BJ (cell line): ENCODE measurements at regions of chr17 and their contacts with region 1.

Region 1: GRCh38 chr17:40303009-40303657 is 5.8 kb upstream of the RARA start:
- DNase-seq: no peak
- H3K4me3 ChIP-seq: no peak overlapping the region
- H3K27me3 ChIP-seq: no peaks in the 10 kb centered on the region
- CTCF ChIP-seq: peak; percentile 69

Region 2: GRCh38 chr17:40203131-40203530 is 100.0 kb before region 1 on chr17:
- CTCF ChIA-PET with region 1: interaction called, 20 read pairs
- POLR2A ChIA-PET with region 1: no interaction called
- DNase-seq: no peak
- H3K4me3 ChIP-seq: no peak overlapping the region
- H3K27me3 ChIP-seq: no peaks in the 10 kb centered on the region
- CTCF ChIP-seq: no peak

Region 3: DNA sequence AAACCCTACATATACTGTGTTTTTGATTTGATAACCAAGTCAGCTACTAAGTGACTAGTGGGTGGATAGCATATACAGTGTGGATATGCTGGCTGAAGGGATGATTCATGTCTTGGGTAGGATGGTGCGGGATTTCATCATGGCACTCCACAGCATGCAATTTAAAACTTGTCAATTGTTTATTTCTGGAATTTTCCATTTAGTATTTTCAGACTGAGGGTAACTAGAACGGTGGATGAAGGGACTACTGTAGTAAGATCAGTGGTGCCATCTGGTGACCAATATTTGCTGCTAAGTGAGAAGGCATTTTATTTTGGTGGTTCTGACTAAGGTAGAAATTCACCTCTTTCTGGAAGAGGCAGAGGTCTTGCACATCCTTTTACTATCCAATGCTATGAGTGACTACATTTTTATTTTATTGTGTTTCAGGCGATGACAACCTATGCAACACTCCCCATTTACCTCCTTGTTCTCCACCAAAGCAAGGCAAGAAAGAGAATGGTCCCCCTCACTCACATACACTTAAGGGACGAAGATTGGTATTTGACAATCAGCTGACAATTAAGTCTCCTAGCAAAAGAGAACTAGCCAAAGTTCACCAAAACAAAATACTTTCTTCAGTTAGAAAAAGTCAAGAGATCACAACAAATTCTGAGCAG is 12.4 kb before region 1 on chr17:
- CTCF ChIA-PET with region 1: interaction called, 11 read pairs
- POLR2A ChIA-PET with region 1: interaction called, 3 read pairs
- DNase-seq: peak; percentile 81
- H3K4me3 ChIP-seq: no peak overlapping the region
- H3K27me3 ChIP-seq: no peaks in the 10 kb centered on the region
- CTCF ChIP-seq: peak; percentile 67

Region 4: DNA sequence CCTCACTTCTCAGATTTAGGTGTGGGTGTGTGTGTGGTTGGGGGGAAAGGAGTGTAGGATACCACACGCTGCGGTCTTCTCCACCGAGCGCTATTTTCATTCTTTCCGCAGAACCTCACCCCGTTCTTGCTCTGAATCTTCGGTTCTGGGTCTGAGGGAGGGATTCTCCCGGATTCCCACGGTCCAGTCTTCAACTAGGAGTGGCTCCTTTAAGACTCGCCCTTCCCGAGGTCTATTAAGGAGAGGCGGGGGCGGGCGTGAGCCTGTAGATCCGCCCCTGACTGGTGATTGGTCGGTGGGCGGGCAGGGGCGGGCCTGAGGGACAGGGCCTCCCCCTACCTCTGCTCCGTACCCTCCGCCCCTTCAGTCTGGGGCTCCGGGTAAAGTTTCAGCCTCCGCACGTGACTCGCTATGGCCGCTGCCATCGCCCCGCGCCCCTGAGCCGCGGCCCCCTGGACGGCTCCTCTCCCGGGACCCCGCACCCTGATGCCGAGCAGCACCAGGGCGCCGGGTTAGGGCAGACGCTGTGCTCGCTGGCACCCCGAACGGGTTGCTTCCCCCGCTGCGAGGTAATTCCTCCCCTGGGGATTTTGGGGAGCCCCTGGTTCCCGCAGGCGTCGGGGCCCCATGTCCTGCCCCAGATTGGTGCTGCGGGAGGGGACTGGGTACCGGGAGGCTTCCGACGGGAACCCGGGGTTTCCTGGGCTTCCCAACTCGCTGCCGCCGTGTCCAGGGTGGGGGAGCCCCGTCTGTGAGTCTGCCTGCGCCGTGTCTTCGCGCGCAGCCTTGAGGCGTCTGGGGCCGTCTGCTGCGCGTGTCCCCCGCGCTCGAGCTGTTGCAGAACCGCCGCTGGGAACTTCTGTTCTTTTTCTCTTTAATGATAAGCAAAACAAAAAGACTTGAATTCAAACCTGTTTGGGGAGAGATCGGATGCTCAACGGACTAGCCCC is 15.0 kb after region 1 on chr17:
- CTCF ChIA-PET with region 1: interaction called, 115 read pairs
- POLR2A ChIA-PET with region 1: interaction called, 7 read pairs
- DNase-seq: peak; percentile 80
- H3K4me3 ChIP-seq: peak overlapping the region; percentile 83
- H3K27me3 ChIP-seq: no peaks in the 10 kb centered on the region
- CTCF ChIP-seq: no peak

Region 5: DNA sequence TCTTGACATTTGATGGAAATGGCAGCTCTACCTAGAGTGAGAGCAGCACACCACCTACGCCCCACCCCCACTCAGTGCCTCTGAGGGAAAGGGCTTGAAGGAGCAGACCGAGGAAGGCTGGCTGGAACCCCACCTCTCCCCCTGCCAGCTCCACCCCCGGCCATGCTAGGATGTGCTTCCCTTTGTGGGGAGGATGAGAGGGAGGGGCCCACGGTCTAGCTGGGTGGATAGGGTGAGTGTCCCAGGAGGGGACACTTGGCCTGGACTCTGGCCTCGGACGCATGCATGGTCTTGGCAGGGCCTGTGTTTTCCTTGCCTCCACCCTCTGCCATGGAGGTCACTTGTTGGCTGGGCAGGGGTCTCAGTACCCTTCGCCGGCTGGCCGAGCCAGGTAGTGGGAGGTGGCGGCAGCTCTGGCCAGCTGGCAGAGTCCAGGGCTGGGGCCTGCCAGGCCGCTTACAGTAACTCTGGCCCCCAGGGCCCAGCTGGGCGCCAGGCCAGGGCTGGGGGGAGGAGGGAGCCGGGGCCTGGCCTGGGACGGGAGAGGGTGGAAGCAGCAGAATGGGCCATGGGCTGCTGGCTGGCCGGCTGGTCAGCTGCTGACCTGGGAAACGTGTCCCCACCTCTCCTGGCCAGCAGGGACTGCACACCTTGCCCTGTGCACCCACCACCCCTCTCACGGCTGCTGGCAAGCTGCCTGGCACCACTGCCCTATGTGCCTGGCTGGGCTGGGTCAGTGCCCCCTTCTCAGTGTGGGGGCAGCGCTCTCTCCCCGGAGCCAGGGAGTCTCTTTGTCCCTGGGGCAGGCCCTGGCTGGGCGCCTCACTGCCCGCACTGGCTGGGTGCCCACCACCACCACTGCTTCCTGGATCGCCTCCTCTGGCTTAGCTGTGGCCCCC is 28.9 kb after region 1 on chr17:
- CTCF ChIA-PET with region 1: interaction called, 16 read pairs
- POLR2A ChIA-PET with region 1: no interaction called
- DNase-seq: no peak
- H3K4me3 ChIP-seq: no peak overlapping the region
- H3K27me3 ChIP-seq: no peaks in the 10 kb centered on the region
- CTCF ChIP-seq: no peak

Region 6: DNA sequence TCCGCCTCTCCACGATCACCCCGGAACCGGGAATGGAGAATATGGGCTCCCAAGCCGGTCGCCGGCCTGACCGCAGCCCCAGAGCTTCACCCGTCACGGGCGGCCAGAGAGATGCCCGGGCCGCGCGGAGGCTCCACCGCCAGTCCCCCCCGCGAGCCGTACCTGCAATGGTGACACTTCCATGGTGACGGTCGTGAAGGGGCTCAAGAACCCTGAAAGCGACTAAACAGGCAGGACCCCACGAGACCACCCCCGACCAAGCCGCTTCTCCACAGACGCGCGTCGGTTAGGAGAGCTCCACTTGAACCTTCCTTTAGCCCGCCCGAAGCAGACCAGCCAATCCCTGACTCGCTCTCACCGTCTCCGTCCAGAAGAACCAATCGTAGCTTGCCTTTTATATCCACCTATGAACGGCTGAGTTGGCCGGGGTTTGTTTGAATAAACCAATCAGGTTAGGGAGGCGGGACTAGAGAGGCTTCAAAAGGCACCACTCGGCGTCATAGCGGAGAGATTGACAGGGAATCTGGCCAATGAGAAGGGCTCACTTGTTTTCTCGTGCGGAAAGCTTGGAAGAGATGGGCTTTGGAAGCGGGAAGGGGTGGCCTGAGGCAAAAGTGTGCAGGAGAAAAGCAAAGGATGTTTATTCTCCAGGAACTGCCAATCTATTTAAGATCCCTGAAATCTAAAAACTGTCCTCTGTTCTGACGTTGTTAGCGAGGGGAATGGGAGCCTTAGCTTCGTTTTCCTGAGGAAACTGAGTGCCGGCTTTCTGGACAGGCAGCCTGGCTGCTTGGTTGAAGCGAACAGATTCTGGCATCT is 114.7 kb after region 1 on chr17 and contains the start of gene TOP2A:
- CTCF ChIA-PET with region 1: interaction called, 32 read pairs
- POLR2A ChIA-PET with region 1: no interaction called
- DNase-seq: peak; percentile 99
- H3K4me3 ChIP-seq: peak within 1 kb of the TSS; percentile 56
- H3K27me3 ChIP-seq: no peaks in the 10 kb centered on the region
- CTCF ChIP-seq: no peak
- polyA plus RNA-seq, gene TOP2A: 31.8 and 69.6 TPM in 2 replicates